Activated CD4-positive, alpha-beta memory T cell treated with anti-CD3 and anti-CD28 coated beads, Interleukin-2, amount 10 ng/mL, durations not matched to agents 7 days and 5 days (primary cell): ENCODE measurements at regions of chr9 and their contacts with region 1.

Region 1: DNA sequence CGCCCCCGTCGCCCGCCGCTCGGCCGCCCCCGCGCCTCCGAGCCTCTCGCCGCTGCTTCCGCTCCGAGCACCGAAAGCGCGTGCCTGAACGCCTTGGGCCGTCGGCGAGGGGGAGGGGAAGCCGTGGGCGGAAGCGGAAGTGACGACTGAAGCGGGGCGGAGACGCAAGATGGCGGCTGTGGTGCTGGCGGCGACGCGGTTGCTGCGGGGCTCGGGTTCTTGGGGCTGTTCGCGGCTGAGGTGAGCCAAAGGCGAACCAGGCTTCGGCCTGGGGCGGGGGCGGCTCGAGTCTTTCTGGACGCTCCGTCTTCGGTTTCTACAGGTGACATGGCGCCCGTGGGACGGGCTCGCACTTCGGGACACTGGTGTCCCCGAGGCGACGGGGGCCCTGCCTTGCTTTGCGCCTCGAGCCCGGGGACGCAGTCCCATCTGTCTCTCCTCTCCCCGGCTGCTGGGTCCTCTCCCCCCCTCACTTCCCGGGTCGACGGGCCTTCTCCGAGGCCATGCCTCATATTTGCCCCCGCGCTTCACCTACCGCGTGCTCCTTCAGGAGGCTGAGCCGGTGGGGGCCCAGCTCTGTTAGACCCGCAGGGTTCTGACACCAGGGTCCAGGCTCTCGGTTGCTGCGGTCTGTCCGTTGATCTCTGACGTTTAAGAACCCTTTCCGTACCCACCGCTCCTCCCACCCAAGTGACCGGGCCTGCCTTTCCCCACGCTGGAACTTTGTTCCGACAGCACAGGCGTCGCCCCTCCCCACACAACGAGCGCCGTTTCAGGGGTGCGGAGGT is at the starts of genes ENTR1 and PMPCA:
- DNase-seq: peak; percentile 94
- H3K4me3 Mint-ChIP-seq: peak within 1 kb of the TSS; percentile 87
- H3K27ac Mint-ChIP-seq: peak within 1 kb of the TSS; percentile 84
- H3K4me1 Mint-ChIP-seq: peaks cover 52% of the 10 kb centered on the region
- H3K27me3 Mint-ChIP-seq: no peaks in the 10 kb centered on the region
- total RNA-seq, gene ENTR1: 49.2 to 54.9 TPM
- total RNA-seq, gene PMPCA: 56.6 to 62.2 TPM

Region 2: GRCh38 chr9:136400038-136400834 is 10.5 kb before region 1 on chr9 and contains the start of gene SNAPC4:
- CTCF ChIA-PET with region 1: interaction called, 22 read pairs
- POLR2A ChIA-PET with region 1: interaction called, 27 read pairs
- DNase-seq: peak; percentile 89
- H3K4me3 Mint-ChIP-seq: peak within 1 kb of the TSS; percentile 83
- H3K27ac Mint-ChIP-seq: peak within 1 kb of the TSS; percentile 78
- H3K4me1 Mint-ChIP-seq: peaks cover 61% of the 10 kb centered on the region
- H3K27me3 Mint-ChIP-seq: no peaks in the 10 kb centered on the region
- total RNA-seq, gene SNAPC4: 8.8 TPM

Region 3: DNA sequence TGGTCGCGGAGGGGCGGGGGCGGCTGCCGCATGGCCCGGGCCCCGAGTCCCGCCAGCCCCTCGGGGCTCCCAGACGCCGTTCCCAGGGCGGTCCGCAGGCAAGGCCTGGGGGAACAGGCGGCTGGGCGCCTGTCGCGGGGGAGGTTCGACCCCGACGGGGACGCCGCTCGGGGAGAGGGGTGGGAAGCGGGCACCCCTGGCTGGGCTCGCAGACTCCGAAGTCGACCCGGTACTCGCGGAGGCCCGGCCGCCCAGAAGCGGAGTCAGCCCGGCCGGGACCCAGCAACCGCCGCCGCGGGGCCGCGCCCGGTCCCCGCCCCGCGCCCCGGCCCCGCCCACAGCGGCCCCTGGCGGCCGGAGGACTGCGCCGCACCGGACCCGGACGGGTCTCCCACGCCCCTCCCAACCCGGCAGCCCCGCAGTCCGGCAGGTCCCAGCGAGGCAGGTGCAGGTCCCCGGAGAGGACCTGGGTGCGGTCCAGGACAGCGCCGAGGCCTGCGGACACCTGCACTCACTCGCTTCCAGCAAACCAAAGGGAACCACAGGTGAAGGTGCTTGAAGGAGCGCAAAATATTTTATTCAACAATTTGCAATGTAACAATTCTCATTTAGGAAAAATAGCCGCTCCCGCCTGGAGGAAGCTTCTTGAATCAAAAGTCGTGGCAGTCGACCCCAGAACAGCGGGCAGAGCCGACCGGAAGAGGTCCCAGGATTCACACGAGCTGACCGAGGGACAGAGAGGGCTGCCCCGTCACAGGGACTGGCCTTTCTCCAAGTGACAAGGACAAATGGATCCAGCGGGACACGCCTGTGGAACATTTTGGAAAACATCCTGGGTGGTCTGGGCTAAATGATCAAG is 29.1 kb after region 1 on chr9 and contains the start of gene INPP5E:
- CTCF ChIA-PET with region 1: interaction called, 4 read pairs
- POLR2A ChIA-PET with region 1: interaction called, 16 read pairs
- DNase-seq: peak; percentile 84
- H3K4me3 Mint-ChIP-seq: peak within 1 kb of the TSS; percentile 87
- H3K27ac Mint-ChIP-seq: no peak within 1 kb of the TSS
- H3K4me1 Mint-ChIP-seq: peaks cover 28% of the 10 kb centered on the region
- H3K27me3 Mint-ChIP-seq: no peaks in the 10 kb centered on the region
- total RNA-seq, gene INPP5E: 19.5 to 21.6 TPM